CD4-positive, alpha-beta memory T cell (primary cell): ENCODE measurements at regions of chr3 and their contacts with region 1.

Region 1: DNA sequence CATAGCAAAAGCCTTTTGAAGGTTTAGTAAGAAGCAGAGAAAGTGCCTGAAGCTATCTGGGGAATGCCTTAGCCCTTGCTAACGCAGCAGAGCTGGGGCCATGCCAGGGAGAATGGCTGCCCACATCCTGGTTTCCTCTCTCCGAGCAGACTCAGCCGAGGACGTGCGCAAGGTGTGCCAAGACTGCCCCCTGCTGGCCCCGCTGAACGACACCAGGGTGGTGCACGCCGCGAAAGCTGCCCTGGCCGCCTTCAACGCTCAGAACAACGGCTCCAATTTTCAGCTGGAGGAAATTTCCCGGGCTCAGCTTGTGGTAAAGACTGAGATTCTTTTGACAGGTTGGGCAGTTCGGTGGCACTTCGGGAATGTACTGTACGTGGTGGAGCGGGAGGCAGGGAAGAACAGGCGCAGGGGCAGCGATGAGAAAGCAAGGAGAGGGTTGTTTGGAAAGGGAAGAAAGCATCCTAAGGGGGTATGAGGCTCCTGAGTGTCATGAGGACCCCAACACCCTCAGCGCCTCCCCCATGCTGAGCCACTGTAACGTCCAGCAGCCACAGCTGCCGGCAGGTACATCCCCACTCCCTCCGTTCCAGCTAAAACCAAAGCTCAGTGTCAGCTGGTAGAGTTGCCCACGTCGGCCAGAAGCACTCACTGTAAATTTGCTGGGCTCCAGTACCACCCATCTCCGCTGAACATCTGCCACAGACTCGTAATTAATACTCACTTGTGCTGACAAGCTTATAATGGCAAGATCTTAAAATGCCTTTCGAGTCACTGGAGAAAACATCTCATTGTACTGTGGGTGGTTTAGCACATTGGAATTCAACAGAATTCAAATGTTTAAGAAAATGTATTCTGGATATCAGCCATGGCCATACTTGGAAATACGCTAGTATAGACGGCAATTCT is 4.4 kb downstream of the AHSG start:
- DNase-seq: peak; percentile 81 to 92 (median 86)
- H3K4me3 ChIP-seq: no peak overlapping the region
- H3K4me3 Mint-ChIP-seq: peak overlapping the region; percentile 37 to 77 (median 63)
- H3K27ac ChIP-seq: no peak overlapping the region
- H3K27ac Mint-ChIP-seq: peak overlapping the region in 5 of 7 donors; percentile 41 to 72 (median 69)
- H3K4me1 ChIP-seq: peaks cover 18% of the 10 kb centered on the region
- H3K4me1 Mint-ChIP-seq: peaks cover 10 to 28% (median 20%) of the 10 kb centered on the region in 4 donors
- H3K27me3 ChIP-seq: no peaks in the 10 kb centered on the region
- H3K27me3 Mint-ChIP-seq: peaks cover 9 to 18% of the 10 kb centered on the region in 2 donors

Region 2: DNA sequence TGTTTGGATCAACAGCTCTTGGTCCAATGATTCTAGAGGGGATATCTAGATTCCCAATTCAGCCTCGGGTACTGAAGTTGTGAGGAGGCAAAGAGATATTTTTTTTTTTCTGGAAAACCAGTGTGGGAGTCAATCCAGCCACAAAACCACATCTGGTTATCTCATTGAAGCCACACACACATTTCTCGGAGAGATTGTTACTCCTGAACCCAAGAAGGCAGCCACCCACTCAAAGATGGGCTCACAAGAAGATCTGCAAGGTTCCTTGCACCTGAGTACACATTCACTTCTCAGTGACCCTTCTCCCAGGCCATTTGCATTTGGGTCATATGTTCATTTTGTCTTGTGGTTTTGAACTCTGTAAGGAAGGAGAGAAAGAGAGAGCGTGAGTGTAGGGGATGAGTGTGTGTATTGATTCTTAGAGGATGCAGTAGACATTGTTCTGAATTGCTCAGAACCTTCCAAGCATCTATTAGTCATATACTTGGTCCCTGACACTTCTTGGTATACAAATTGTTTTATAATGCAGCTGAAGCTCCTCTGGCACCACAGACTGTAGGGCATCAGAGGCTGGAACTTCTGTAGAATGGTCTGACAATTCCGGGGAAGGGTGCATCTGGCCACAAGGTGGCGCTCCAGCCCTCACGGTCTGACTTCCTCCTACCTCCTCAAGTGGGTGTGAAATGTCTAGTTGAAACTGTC is 640.2 kb before region 1 on chr3:
- CTCF ChIA-PET with region 1: interaction called, 91 read pairs
- POLR2A ChIA-PET with region 1: interaction called, 3 read pairs
- intact Hi-C with region 1: loop called (anchors 1 kb)
- DNase-seq: peak; percentile 61 to 70 (median 65)
- H3K4me3 ChIP-seq: no peak overlapping the region
- H3K4me3 Mint-ChIP-seq: no peak overlapping the region
- H3K27ac ChIP-seq: no peak overlapping the region
- H3K27ac Mint-ChIP-seq: no peak overlapping the region
- H3K4me1 ChIP-seq: no peaks in the 10 kb centered on the region
- H3K4me1 Mint-ChIP-seq: peaks cover 2 to 5% (median 5%) of the 10 kb centered on the region in 4 donors
- H3K27me3 ChIP-seq: no peaks in the 10 kb centered on the region
- H3K27me3 Mint-ChIP-seq: peaks cover 0 to 2% of the 10 kb centered on the region in 2 donors

Region 3: GRCh38 chr3:186241910-186242821 is 375.1 kb before region 1 on chr3:
- CTCF ChIA-PET with region 1: no interaction called
- POLR2A ChIA-PET with region 1: no interaction called
- intact Hi-C with region 1: no loop called
- DNase-seq: peak in 1 of 5 donors; percentile 9
- H3K4me3 ChIP-seq: no peak overlapping the region
- H3K4me3 Mint-ChIP-seq: peak overlapping the region in 2 of 8 donors; percentile 23 to 24
- H3K27ac ChIP-seq: no peak overlapping the region
- H3K27ac Mint-ChIP-seq: no peak overlapping the region
- H3K4me1 ChIP-seq: no peaks in the 10 kb centered on the region
- H3K4me1 Mint-ChIP-seq: peaks cover 0 to 4% (median 2%) of the 10 kb centered on the region in 4 donors
- H3K27me3 ChIP-seq: no peaks in the 10 kb centered on the region
- H3K27me3 Mint-ChIP-seq: peaks cover 5 to 12% of the 10 kb centered on the region in 2 donors

Region 4: GRCh38 chr3:186354100-186354499 is 263.2 kb before region 1 on chr3:
- CTCF ChIA-PET with region 1: no interaction called
- POLR2A ChIA-PET with region 1: no interaction called
- intact Hi-C with region 1: no loop called
- DNase-seq: no peak
- H3K4me3 ChIP-seq: no peak overlapping the region
- H3K4me3 Mint-ChIP-seq: no peak overlapping the region
- H3K27ac ChIP-seq: no peak overlapping the region
- H3K27ac Mint-ChIP-seq: no peak overlapping the region
- H3K4me1 ChIP-seq: no peaks in the 10 kb centered on the region
- H3K4me1 Mint-ChIP-seq: no peaks in the 10 kb centered on the region
- H3K27me3 ChIP-seq: no peaks in the 10 kb centered on the region
- H3K27me3 Mint-ChIP-seq: peaks cover 10 to 13% of the 10 kb centered on the region in 2 donors

Region 5: DNA sequence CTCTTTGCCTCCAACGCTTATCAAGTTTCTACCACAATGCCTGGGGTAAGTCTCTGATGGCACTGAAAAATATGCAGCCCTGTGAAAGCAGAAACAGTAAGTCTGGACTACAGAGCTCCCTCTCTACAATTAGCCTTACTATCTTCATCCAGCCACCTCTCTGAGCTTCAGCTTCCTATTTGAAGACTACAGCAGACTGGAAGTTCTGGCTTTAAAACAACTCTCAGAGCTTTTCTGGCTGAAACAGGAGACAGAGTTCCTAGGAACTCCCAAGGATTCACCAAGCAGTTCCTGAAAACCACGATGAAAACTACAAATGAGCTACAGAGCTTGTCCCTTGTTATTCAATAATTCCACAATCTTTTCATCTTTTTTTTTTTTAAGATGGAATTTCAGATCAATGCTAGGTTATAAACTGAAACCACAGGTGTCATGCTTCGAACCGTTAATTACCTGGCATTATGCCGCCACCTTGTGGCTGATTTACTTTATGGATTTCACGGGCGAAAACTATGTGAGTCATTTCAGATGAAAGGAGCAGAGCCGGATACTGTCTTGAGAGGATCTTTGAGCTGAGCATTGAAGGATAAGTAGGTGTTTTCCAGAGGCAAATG is 77.0 kb before region 1 on chr3:
- CTCF ChIA-PET with region 1: interaction called, 116 read pairs
- POLR2A ChIA-PET with region 1: interaction called, 7 read pairs
- intact Hi-C with region 1: loop called (anchors 1 kb)
- DNase-seq: peak; percentile 78 to 85 (median 82)
- H3K4me3 ChIP-seq: no peak overlapping the region
- H3K4me3 Mint-ChIP-seq: peak overlapping the region in 3 of 8 donors; percentile 2 to 48 (median 36)
- H3K27ac ChIP-seq: no peak overlapping the region
- H3K27ac Mint-ChIP-seq: peak overlapping the region in 6 of 7 donors; percentile 11 to 53 (median 47)
- H3K4me1 ChIP-seq: peaks cover 9% of the 10 kb centered on the region
- H3K4me1 Mint-ChIP-seq: peaks cover 6 to 15% (median 10%) of the 10 kb centered on the region in 4 donors
- H3K27me3 ChIP-seq: no peaks in the 10 kb centered on the region
- H3K27me3 Mint-ChIP-seq: no peaks in the 10 kb centered on the region

Region 6: GRCh38 chr3:186589121-186589520 is 28.2 kb before region 1 on chr3:
- CTCF ChIA-PET with region 1: interaction called, 255 read pairs
- POLR2A ChIA-PET with region 1: interaction called, 7 read pairs
- intact Hi-C with region 1: loop called (anchors 1 kb)
- DNase-seq: no peak
- H3K4me3 ChIP-seq: no peak overlapping the region
- H3K4me3 Mint-ChIP-seq: no peak overlapping the region
- H3K27ac ChIP-seq: no peak overlapping the region
- H3K27ac Mint-ChIP-seq: no peak overlapping the region
- H3K4me1 ChIP-seq: peaks cover 14% of the 10 kb centered on the region
- H3K4me1 Mint-ChIP-seq: peaks cover 8 to 23% (median 16%) of the 10 kb centered on the region in 4 donors
- H3K27me3 ChIP-seq: no peaks in the 10 kb centered on the region
- H3K27me3 Mint-ChIP-seq: no peaks in the 10 kb centered on the region

Region 7: GRCh38 chr3:186783073-186783730 is 165.9 kb after region 1 on chr3 and contains the start of gene EIF4A2:
- CTCF ChIA-PET with region 1: interaction called, 14 read pairs
- POLR2A ChIA-PET with region 1: interaction called, 29 read pairs
- intact Hi-C with region 1: no loop called
- DNase-seq: peak; percentile 91 to 93 (median 93)
- H3K4me3 ChIP-seq: peak within 1 kb of the TSS; percentile 86 to 97
- H3K4me3 Mint-ChIP-seq: peak within 1 kb of the TSS; percentile 95 to 100 (median 100)
- H3K27ac ChIP-seq: peak within 1 kb of the TSS; percentile 98
- H3K27ac Mint-ChIP-seq: peak within 1 kb of the TSS; percentile 97 to 100 (median 100)
- H3K4me1 ChIP-seq: peaks cover 38% of the 10 kb centered on the region
- H3K4me1 Mint-ChIP-seq: peaks cover 39 to 63% (median 46%) of the 10 kb centered on the region in 4 donors
- H3K27me3 ChIP-seq: no peaks in the 10 kb centered on the region
- H3K27me3 Mint-ChIP-seq: peaks cover 0 to 1% of the 10 kb centered on the region in 2 donors
- total RNA-seq, gene EIF4A2: 589 to 632 TPM

Region 8: GRCh38 chr3:186826976-186827731 is 209.9 kb after region 1 on chr3:
- CTCF ChIA-PET with region 1: interaction called, 278 read pairs
- POLR2A ChIA-PET with region 1: interaction called, 6 read pairs
- intact Hi-C with region 1: no loop called
- DNase-seq: peak; percentile 81 to 89 (median 87)
- H3K4me3 ChIP-seq: peak overlapping the region in 1 of 2 donors; percentile 65
- H3K4me3 Mint-ChIP-seq: peak overlapping the region; percentile 65 to 93 (median 78)
- H3K27ac ChIP-seq: peak overlapping the region; percentile 47
- H3K27ac Mint-ChIP-seq: peak overlapping the region in 2 of 7 donors; percentile 18 to 28
- H3K4me1 ChIP-seq: peaks cover 25% of the 10 kb centered on the region
- H3K4me1 Mint-ChIP-seq: peaks cover 5 to 16% (median 12%) of the 10 kb centered on the region in 4 donors
- H3K27me3 ChIP-seq: peaks cover 21% of the 10 kb centered on the region
- H3K27me3 Mint-ChIP-seq: peaks cover 30 to 38% of the 10 kb centered on the region in 2 donors